Transverse colon (tissue), 4 donors: ENCODE measurements at regions of chr5 and their contacts with region 1.

Region 1: DNA sequence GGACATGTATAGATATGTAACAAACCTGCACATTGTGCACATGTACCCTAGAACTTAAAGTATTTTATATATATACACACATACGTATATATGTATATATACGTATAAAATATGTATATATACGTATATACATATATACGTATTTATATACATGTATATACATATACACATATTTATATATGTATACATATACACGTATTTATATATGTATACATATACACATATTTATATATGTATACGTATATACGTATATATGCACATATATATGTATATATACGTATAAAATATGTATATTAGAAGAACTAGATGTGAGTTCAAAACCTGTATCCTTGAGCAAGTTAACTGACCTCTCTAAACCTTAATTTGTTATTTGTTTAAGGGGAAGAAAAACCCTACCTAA is 61.4 kb downstream of the FNIP1 start:
- DNase-seq: no peak
- H3K4me3 ChIP-seq: no peak overlapping the region
- H3K27ac ChIP-seq: no peak overlapping the region
- H3K4me1 ChIP-seq: no peaks in the 10 kb centered on the region
- H3K27me3 ChIP-seq: no peaks in the 10 kb centered on the region
- CTCF ChIP-seq: no peak
- EP300 ChIP-seq: no peak
- POLR2A ChIP-seq: no peak

Region 2: DNA sequence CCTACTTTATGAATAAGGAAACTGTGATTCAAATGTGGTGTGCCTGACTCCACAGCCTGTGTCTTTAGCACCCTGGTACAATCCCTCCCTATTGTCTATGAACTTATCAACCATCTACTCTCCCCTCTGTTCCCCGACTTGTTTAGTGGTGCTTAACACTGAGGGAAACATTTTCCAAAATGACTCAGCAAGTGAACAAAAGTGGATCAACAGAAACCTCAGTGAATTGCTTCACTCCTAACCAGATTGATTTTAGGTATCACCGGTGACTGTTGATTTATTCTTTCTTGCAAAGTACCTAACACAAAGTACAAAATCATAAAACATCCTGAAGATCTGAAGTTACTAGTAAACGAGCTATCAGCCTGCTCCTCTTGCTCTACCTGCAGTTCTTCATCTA is 58.3 kb before region 1 on chr5:
- in situ Hi-C with region 1: no loop called
- intact Hi-C with region 1: loop called (anchors 2 kb)
- DNase-seq: no peak
- H3K4me3 ChIP-seq: no peak overlapping the region
- H3K27ac ChIP-seq: no peak overlapping the region
- H3K4me1 ChIP-seq: peaks cover 6 to 18% (median 9%) of the 10 kb centered on the region in 4 donors
- H3K27me3 ChIP-seq: no peaks in the 10 kb centered on the region
- CTCF ChIP-seq: no peak
- EP300 ChIP-seq: no peak
- POLR2A ChIP-seq: no peak